ENCODE measurements at regions of chr11 and their contacts with region 1.

Region 1: DNA sequence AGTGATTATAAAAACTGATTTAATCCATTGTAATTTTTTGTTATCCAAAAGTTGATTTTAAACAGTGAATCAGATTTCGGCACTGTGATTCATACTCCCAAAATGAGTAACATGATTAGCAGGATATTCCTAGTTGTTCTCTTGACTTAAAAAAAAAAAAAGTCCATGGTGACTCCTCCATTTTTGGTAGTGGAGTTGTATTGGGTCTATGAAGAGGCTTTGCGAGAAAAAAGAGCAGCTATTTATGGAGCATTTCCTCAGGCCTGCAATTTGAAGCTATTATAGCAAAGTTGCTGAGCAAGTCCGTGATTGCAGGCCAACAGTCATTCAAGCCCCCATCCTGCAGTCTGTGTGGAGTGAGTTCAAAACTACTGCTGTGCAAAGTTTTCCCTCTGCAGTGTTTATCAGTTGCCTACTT is 28.8 kb downstream of the YAP1 start:
- DNase-seq: peak in 1 of 2 donors; percentile 55
- ATAC-seq: peak; percentile 91
- H3K4me3 ChIP-seq: peak overlapping the region in 1 of 2 donors; percentile 18
- H3K27ac ChIP-seq: peak overlapping the region; percentile 63 to 90
- H3K4me1 ChIP-seq: peaks cover 6 to 8% of the 10 kb centered on the region in 2 donors
- H3K27me3 ChIP-seq: no peaks in the 10 kb centered on the region

Region 2: DNA sequence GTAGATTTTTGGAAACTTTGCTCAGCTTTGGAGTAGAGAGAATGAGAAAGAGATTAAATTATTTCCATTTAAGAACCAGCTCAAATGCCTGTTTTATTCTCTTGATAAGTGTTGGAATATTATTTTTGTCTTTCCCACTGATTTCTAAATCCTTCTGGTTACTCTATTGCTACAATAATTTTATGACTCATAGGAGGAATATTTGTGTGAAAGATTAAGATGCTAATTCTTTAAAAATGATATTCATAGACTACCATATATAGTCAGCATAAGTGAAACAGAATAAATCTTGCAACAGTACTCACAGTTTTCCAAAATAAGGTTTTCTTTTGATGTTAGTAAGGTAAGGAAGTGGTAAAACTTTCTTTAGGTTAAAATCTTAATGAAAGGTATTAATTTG is 32.0 kb after region 1 on chr11:
- intact Hi-C with region 1: loop called (anchors 2 to 5 kb)
- DNase-seq: no peak
- ATAC-seq: peak; percentile 77
- H3K4me3 ChIP-seq: peak overlapping the region in 1 of 2 donors; percentile 34
- H3K27ac ChIP-seq: no peak overlapping the region
- H3K4me1 ChIP-seq: peaks cover 0 to 9% of the 10 kb centered on the region in 2 donors
- H3K27me3 ChIP-seq: no peaks in the 10 kb centered on the region

Region 3: GRCh38 chr11:102240502-102240901 is 101.4 kb after region 1 on chr11:
- intact Hi-C with region 1: no loop called
- DNase-seq: no peak
- ATAC-seq: no peak
- H3K4me3 ChIP-seq: no peak overlapping the region
- H3K27ac ChIP-seq: peak overlapping the region in 1 of 2 donors; percentile 4
- H3K4me1 ChIP-seq: no peaks in the 10 kb centered on the region
- H3K27me3 ChIP-seq: no peaks in the 10 kb centered on the region

Region 4: GRCh38 chr11:102476812-102477211 is 337.7 kb after region 1 on chr11:
- intact Hi-C with region 1: no loop called
- DNase-seq: no peak
- ATAC-seq: no peak
- H3K4me3 ChIP-seq: no peak overlapping the region
- H3K27ac ChIP-seq: no peak overlapping the region
- H3K4me1 ChIP-seq: no peaks in the 10 kb centered on the region
- H3K27me3 ChIP-seq: no peaks in the 10 kb centered on the region

Measured in aorta (tissue), 5 donors.